SK-N-SH (cell line): ENCODE measurements at regions of chr7 and their contacts with region 1.

Region 1: DNA sequence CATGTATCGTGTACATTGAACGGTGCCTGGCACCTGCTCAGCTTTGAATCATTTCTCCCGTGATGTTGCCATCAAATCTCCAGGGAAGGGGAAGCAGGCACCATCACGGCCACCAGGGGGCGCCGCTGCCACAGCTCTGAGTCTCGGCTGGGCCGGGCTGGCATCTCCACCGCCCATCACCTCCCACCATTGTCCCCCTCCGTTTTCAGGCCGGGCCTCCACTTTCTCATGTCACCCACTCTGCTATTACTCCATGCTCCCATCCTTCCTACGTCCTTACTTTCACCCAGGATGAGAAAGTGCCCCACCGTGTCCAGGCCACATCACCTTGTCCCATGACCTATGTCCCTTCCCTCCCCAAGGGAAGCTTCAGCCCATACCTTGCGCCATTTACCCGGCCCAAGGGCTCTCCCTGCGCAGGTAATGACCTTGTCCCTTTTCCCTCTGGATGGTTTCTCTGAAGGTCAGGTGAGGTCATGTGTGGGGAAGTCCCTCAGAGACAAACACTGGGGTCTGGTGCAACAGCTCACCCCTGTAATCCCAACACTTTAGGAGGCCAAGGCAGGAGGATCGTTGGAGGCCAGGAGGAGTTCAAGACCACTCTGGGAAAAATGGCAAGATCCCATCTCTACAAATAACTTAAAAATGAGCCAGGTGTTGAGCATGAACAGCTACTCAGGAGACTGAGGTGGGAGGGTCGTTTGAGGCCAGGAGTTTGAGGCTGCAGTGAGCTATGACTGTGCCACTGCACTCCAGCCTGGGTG is 31.8 kb upstream of the OCM2 start:
- DNase-seq: peak; percentile 91
- H3K4me3 ChIP-seq: no peak overlapping the region; a peak in 1 of 4 replicates
- H3K27ac ChIP-seq: no peak overlapping the region
- H3K4me1 ChIP-seq: no peaks in the 10 kb centered on the region; a peak in 1 of 4 replicates
- H3K27me3 ChIP-seq: peaks cover 6% of the 10 kb centered on the region; the same call in 1 of the 2 replicates
- CTCF ChIP-seq: peak; percentile 98
- EP300 ChIP-seq: no peak
- RAD21 ChIP-seq: peak; percentile 97

Region 2: DNA sequence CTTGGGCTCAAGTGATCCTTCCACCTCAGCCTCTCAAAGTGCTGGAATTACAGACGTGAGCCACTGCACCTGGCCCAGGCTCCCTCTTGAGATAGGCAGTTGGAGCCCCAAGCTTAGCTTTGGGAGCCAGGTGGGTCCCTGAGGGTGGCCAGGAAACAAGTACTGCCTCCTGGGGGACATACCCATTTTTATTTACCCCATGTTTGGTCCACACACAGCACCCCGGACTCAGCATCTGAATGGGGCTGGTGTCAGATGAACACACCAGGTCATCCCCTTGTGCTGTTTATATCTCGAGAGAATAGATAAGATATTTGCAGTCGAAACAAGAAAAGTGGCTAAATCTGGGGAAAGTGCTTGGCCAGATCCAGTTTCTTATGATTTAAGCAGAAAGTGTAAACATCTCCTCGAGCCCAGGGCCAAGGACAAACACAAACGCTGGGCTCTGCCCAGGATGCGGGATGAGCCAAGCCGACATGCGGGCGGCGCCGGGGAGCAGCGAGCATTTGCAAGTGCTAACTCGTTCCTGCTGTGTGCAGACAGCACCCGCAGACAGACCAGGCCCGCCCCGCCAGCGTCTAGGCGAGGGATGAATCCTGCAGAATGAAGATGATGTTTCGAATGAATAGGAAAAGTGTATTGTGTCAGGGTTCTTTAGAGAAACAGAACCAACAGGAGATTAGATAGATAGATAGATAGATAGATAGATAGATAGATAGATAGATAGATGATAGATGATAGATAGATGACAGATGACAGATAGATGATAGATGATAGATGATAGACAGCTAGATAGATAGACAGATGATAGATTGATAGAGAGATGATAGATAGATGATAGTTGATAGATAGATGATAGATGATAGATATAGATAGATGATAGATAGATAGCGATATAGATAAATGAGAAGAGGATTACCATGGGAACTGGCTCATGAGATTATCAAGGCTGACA is 12.6 kb after region 1 on chr7:
- CTCF ChIA-PET with region 1: interaction called, 45 read pairs
- POLR2A ChIA-PET with region 1: no interaction called
- DNase-seq: peak; percentile 62
- H3K4me3 ChIP-seq: peak overlapping the region in 1 of 2 experiments; percentile 24; a peak in 1 of 4 replicates
- H3K27ac ChIP-seq: no peak overlapping the region
- H3K4me1 ChIP-seq: no peaks in the 10 kb centered on the region; a peak in 1 of 4 replicates
- H3K27me3 ChIP-seq: peaks cover 22% of the 10 kb centered on the region; the same call in 1 of the 2 replicates
- CTCF ChIP-seq: no peak
- EP300 ChIP-seq: no peak
- RAD21 ChIP-seq: no peak

Region 3: DNA sequence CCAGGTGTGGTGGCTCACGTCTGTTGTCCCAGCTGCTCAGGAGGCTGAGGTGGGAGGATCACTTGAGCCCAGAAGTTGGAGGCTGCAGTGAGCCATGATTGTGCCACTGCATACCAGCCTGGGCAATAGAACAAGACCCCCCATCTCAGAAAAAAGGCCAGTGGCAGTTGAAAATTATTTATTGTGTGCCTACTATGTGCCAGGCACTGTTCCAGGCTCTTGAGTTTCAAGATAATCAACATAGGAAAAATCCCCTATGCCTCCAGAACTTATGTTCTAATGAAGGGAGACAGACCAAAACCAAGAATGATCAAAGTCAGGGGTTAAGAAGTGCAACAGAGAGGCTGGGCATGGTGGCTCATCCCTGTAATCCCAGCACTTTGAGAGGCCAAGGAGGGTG is 42.5 kb after region 1 on chr7:
- CTCF ChIA-PET with region 1: interaction called, 15 read pairs
- POLR2A ChIA-PET with region 1: no interaction called
- DNase-seq: no peak
- H3K4me3 ChIP-seq: no peak overlapping the region
- H3K27ac ChIP-seq: no peak overlapping the region
- H3K4me1 ChIP-seq: no peaks in the 10 kb centered on the region
- H3K27me3 ChIP-seq: peaks cover 4% of the 10 kb centered on the region; the same call in 1 of the 2 replicates
- CTCF ChIP-seq: no peak
- EP300 ChIP-seq: no peak
- RAD21 ChIP-seq: no peak

Region 4: DNA sequence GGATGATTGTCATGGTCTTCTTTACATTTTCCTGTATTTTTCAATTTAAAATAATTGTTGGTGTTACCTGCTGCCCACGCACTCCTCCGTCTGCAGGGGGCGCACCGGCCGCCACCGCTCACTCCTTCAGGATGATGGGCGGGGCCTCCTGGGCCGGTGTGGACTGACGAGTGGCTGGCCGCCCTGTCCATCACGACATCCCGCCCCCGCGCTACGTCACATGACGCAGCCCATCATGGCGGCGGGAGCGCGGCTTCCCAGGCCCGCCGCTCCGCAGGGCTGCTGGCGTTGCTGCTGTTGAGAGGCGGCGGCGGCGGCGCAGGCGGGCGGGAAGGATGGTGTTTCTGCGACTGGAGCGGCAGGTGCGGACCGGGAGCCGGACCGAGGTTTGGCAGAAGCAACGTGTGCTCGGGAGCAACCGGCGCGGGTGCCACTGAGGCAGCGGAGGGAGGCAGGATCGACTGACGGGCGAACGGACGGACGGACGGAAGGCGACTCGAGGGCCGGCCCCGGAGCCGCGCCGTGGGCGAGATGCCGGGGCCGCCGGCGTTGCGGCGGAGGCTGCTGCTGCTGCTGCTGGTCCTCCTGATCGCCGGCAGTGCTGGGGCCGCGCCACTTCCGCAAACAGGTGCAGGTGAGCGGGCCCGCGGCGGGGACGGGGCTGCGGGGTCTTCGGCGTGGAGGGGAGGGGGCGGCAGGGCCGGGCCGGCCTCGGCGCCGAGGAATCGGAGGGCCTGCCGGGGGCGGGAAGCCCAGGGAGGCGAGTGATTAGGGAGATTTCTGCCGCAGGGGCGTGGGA is 85.1 kb after region 1 on chr7 and contains the start of gene LMTK2:
- CTCF ChIA-PET with region 1: interaction called, 33 read pairs
- POLR2A ChIA-PET with region 1: no interaction called
- DNase-seq: peak; percentile 100
- H3K4me3 ChIP-seq: peak within 1 kb of the TSS; percentile 87 to 99
- H3K27ac ChIP-seq: peak within 1 kb of the TSS; percentile 64 to 75; a peak in 3 of 4 replicates
- H3K4me1 ChIP-seq: peaks cover 9 to 12% of the 10 kb centered on the region in 2 experiments; a peak in 3 of 4 replicates
- H3K27me3 ChIP-seq: no peaks in the 10 kb centered on the region
- CTCF ChIP-seq: peak; percentile 100
- EP300 ChIP-seq: no peak; a peak in 1 of 4 replicates
- RAD21 ChIP-seq: peak; percentile 76
- polyA plus RNA-seq, gene LMTK2: 6.8 and 9.0 TPM in 2 replicates

Region 5: GRCh38 chr7:98142658-98143057 is 120.9 kb after region 1 on chr7:
- CTCF ChIA-PET with region 1: interaction called, 10 read pairs
- POLR2A ChIA-PET with region 1: no interaction called
- DNase-seq: no peak
- H3K4me3 ChIP-seq: no peak overlapping the region
- H3K27ac ChIP-seq: no peak overlapping the region
- H3K4me1 ChIP-seq: no peaks in the 10 kb centered on the region
- H3K27me3 ChIP-seq: no peaks in the 10 kb centered on the region
- CTCF ChIP-seq: no peak
- EP300 ChIP-seq: no peak
- RAD21 ChIP-seq: no peak

Region 6: GRCh38 chr7:98211676-98212531 is 190.1 kb after region 1 on chr7:
- CTCF ChIA-PET with region 1: interaction called, 20 read pairs
- POLR2A ChIA-PET with region 1: no interaction called
- DNase-seq: peak; percentile 60
- H3K4me3 ChIP-seq: peak overlapping the region; percentile 12 to 41; a peak in 2 of 4 replicates
- H3K27ac ChIP-seq: no peak overlapping the region
- H3K4me1 ChIP-seq: peaks cover 0 to 3% of the 10 kb centered on the region in 2 experiments; a peak in 1 of 4 replicates
- H3K27me3 ChIP-seq: no peaks in the 10 kb centered on the region
- CTCF ChIP-seq: no peak
- EP300 ChIP-seq: no peak
- RAD21 ChIP-seq: no peak